HCT116 (cell line): ENCODE measurements at regions of chr9 and their contacts with region 1.

Region 1: GRCh38 chr9:26744191-26744965 is 148.2 kb downstream of the CAAP1 start:
- DNase-seq: peak; percentile 10
- ATAC-seq: no peak
- H3K4me3 ChIP-seq: no peak overlapping the region
- H3K27ac ChIP-seq: no peak overlapping the region
- H3K4me1 ChIP-seq: peaks cover 4 to 11% of the 10 kb centered on the region in 2 experiments; a peak in 2 of 4 replicates
- H3K27me3 ChIP-seq: no peaks in the 10 kb centered on the region
- CTCF ChIP-seq: peak; percentile 49 to 81 (median 64); a peak in 5 of 6 replicates
- POLR2A ChIP-seq: no peak
- RAD21 ChIP-seq: peak; percentile 70

Region 2: GRCh38 chr9:26809795-26810194 is 65.4 kb after region 1 on chr9:
- CTCF ChIA-PET with region 1: no interaction called
- POLR2A ChIA-PET with region 1: no interaction called
- RAD21 ChIA-PET with region 1: no interaction called
- intact Hi-C with region 1: loop called (anchors 10 kb)
- DNase-seq: peak; percentile 59
- ATAC-seq: peak; percentile 55
- H3K4me3 ChIP-seq: no peak overlapping the region
- H3K27ac ChIP-seq: no peak overlapping the region
- H3K4me1 ChIP-seq: peaks cover 0 to 6% of the 10 kb centered on the region in 2 experiments; a peak in 2 of 4 replicates
- H3K27me3 ChIP-seq: no peaks in the 10 kb centered on the region
- CTCF ChIP-seq: no peak
- POLR2A ChIP-seq: no peak
- RAD21 ChIP-seq: no peak

Region 3: GRCh38 chr9:26856413-26857032 is 112.1 kb after region 1 on chr9:
- CTCF ChIA-PET with region 1: interaction called, 6 read pairs
- POLR2A ChIA-PET with region 1: no interaction called
- RAD21 ChIA-PET with region 1: interaction called in 1 of 2 experiments, 3 read pairs
- intact Hi-C with region 1: loop called (anchors 1 kb)
- DNase-seq: peak; percentile 56
- ATAC-seq: peak; percentile 69
- H3K4me3 ChIP-seq: no peak overlapping the region
- H3K27ac ChIP-seq: no peak overlapping the region
- H3K4me1 ChIP-seq: no peaks in the 10 kb centered on the region
- H3K27me3 ChIP-seq: no peaks in the 10 kb centered on the region
- CTCF ChIP-seq: peak; percentile 44 to 80 (median 79); a peak in 5 of 6 replicates
- POLR2A ChIP-seq: no peak
- RAD21 ChIP-seq: peak; percentile 69

Region 4: DNA sequence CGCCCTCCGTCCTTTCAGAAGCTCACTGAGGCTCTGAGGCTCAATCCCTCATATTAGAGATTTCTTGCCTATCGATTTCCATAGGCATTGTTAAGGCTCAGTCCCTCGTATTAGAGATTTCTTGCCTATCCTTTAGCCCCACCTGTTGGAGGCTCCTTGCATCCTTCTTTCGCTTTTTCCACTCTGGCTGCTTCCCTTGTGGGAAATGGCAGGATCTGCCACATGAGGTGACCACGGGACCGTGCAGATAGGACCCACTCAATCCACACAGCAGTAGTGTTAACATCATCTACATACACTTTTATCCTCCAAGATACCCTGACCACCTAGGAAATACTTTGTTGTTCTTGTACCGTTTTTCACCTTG is 231.3 kb after region 1 on chr9:
- CTCF ChIA-PET with region 1: no interaction called
- POLR2A ChIA-PET with region 1: no interaction called
- RAD21 ChIA-PET with region 1: no interaction called
- intact Hi-C with region 1: loop called (anchors 1 kb)
- DNase-seq: peak; percentile 48
- ATAC-seq: peak; percentile 90
- H3K4me3 ChIP-seq: no peak overlapping the region
- H3K27ac ChIP-seq: peak overlapping the region; percentile 21; the same call in 1 of the 2 replicates
- H3K4me1 ChIP-seq: peaks cover 13 to 14% of the 10 kb centered on the region in 2 experiments
- H3K27me3 ChIP-seq: no peaks in the 10 kb centered on the region
- CTCF ChIP-seq: peak; percentile 56 to 76 (median 68)
- POLR2A ChIP-seq: no peak
- RAD21 ChIP-seq: peak; percentile 81